Mucosa of descending colon (tissue), 3 donors: ENCODE measurements at regions of chr11 and their contacts with region 1.

Region 1: GRCh38 chr11:57493507-57494503 is 21.7 kb downstream of the SLC43A1 start:
- DNase-seq: peak in 2 of 3 donors; percentile 74 to 77
- ATAC-seq: peak; percentile 88
- H3K4me3 ChIP-seq: no peak overlapping the region
- H3K4me1 ChIP-seq: no peaks in the 10 kb centered on the region
- CTCF ChIP-seq: peak; percentile 84

Region 2: DNA sequence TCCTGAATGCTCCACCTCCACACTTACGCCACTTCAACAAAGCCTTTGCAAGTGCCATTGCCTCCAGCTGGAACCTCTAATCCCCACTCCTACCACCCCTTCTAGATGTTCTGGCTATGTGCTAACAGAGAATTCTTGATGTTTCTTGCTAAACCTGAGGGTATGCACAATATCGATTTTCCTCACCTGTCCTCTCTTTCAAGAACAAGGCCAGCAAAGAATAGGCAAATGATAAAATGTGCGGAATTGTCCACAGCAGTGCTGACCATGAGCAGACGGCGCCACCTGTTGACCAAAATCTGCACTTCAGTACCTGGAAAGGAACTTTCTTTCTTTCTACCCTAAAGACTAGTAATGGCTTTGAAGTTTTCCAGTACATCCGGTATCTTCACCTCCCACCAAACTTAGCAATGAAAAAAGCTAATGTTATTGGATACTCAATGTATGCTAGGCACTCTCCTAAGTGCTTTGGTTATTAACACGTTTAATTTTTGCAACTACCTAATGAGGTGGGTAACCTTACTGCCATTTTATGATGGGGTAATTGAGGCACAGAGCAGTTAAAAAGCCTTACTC is 33.3 kb after region 1 on chr11:
- intact Hi-C with region 1: loop called (anchors 5 kb)
- DNase-seq: peak in 2 of 3 donors; percentile 76 to 93
- ATAC-seq: peak; percentile 24
- H3K4me3 ChIP-seq: no peak overlapping the region
- H3K4me1 ChIP-seq: peaks cover 13% of the 10 kb centered on the region
- CTCF ChIP-seq: peak; percentile 83